ENCODE measurements at regions of chr3 and their contacts with region 1.

Region 1: GRCh38 chr3:165854696-165855095 is 17.5 kb upstream of the BCHE start:
- DNase-seq: no peak
- H3K4me3 ChIP-seq: no peak overlapping the region
- H3K27ac ChIP-seq: peak overlapping the region in 1 of 59 donors; percentile 57
- H3K27me3 ChIP-seq: no peaks in the 10 kb centered on the region
- CTCF ChIP-seq: peak; percentile 30 to 70 (median 60)

Region 2: GRCh38 chr3:165827883-165828282 is 26.8 kb before region 1 on chr3:
- intact Hi-C with region 1: no loop called
- DNase-seq: no peak
- H3K4me3 ChIP-seq: no peak overlapping the region
- H3K27ac ChIP-seq: no peak overlapping the region
- H3K27me3 ChIP-seq: no peaks in the 10 kb centered on the region
- CTCF ChIP-seq: no peak

Region 3: DNA sequence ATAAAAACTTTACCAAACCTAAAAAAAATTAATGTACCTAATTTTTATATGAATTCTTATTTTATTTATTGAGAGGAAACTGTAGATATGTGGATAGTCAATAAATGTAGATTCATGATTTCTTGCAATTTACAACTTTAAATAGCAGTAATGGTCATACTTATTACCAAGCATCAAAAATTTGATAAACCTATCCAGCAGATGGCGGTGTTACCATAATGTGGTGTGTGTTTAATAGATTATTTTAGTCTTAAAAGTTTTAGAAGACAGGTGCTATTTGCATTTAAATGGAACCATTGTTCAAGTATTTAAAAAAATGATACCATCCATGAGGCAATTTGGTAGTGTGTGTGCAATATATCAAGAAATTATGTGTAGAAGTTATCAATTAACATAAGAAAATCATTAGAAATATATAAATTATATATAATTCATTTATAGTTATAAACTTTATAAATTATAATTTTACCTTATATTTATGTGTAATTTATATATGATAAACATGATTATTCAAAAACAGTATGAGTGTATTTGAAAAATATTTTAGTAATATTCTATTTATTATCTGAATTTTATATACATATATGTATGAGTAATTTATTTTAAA is 158.5 kb after region 1 on chr3:
- intact Hi-C with region 1: loop called in 1 of 2 experiments (anchors 10 kb)
- DNase-seq: no peak
- H3K4me3 ChIP-seq: no peak overlapping the region
- H3K27ac ChIP-seq: no peak overlapping the region
- H3K27me3 ChIP-seq: no peaks in the 10 kb centered on the region
- CTCF ChIP-seq: peak; percentile 17 to 66 (median 47)